Activated CD4-positive, alpha-beta T cell treated with anti-CD3 and anti-CD28 coated beads, Interleukin-2, amount 10 ng/mL, durations not matched to agents 7 days and 5 days (primary cell): ENCODE measurements at regions of chr14 and their contacts with region 1.

Region 1: DNA sequence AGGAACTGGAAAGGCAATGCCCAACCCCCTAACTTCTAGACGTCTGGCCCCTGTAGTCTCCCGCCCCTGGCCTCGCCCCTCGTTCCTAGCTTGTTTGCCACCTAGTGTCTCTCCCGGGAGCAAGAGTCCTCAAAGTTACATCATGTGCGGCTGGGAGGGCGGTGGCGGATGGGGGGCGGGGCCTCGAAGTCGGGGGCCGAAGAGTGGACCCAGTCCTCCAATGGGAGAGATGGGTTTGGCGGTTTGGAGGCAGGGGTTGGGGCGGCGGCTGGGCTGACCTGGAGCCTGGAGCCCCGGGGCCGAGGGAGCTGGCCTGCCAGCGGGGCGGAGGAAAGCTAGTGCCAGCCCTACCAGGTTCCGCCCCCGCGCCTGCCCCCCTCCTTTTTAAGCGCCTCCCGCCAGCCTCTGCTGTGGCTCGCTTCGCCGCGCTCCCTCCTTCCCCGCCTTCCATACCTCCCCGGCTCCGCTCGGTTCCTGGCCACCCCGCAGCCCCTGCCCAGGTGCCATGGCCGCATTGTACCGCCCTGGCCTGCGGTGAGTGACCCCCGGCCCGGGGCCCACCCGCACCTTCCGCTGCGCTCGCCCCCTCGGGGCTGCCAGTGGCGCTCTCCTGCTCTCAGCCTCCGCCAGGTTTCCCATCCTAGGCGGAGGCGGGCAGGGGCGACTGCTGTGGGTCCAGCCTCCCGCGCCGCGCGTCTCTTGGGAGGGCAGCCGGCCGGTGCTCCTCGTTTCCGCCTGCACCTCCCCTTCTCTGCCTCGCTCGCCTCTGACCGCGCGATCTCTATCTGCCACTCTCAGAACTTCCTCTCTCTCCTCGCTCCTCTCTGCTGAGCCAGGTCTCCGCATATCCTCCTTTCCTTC is at the start of gene PCK2:
- DNase-seq: peak; percentile 79
- H3K4me3 Mint-ChIP-seq: peak within 1 kb of the TSS; percentile 100
- H3K27ac Mint-ChIP-seq: peak within 1 kb of the TSS; percentile 98
- H3K4me1 Mint-ChIP-seq: peaks cover 35% of the 10 kb centered on the region
- H3K27me3 Mint-ChIP-seq: no peaks in the 10 kb centered on the region
- total RNA-seq, gene PCK2: 57.4 to 60.3 TPM

Region 2: GRCh38 chr14:24080888-24081738 is 13.0 kb before region 1 on chr14:
- CTCF ChIA-PET with region 1: interaction called, 36 read pairs
- POLR2A ChIA-PET with region 1: no interaction called
- DNase-seq: peak; percentile 79
- H3K4me3 Mint-ChIP-seq: peak overlapping the region; percentile 79
- H3K27ac Mint-ChIP-seq: peak overlapping the region; percentile 90
- H3K4me1 Mint-ChIP-seq: peaks cover 31% of the 10 kb centered on the region
- H3K27me3 Mint-ChIP-seq: peaks cover 3% of the 10 kb centered on the region

Region 3: GRCh38 chr14:24108336-24108874 is 14.3 kb after region 1 on chr14:
- CTCF ChIA-PET with region 1: interaction called, 138 read pairs
- POLR2A ChIA-PET with region 1: interaction called, 13 read pairs
- DNase-seq: no peak
- H3K4me3 Mint-ChIP-seq: no peak overlapping the region
- H3K27ac Mint-ChIP-seq: peak overlapping the region; percentile 96
- H3K4me1 Mint-ChIP-seq: peaks cover 44% of the 10 kb centered on the region
- H3K27me3 Mint-ChIP-seq: no peaks in the 10 kb centered on the region

Region 4: GRCh38 chr14:24114536-24115450 is 20.7 kb after region 1 on chr14 and contains the starts of genes DCAF11 and NRL:
- CTCF ChIA-PET with region 1: interaction called, 138 read pairs
- POLR2A ChIA-PET with region 1: interaction called, 9 read pairs
- DNase-seq: peak; percentile 99
- H3K4me3 Mint-ChIP-seq: peak within 1 kb of the TSS; percentile 100
- H3K27ac Mint-ChIP-seq: peak within 1 kb of the TSS; percentile 99
- H3K4me1 Mint-ChIP-seq: peaks cover 51% of the 10 kb centered on the region
- H3K27me3 Mint-ChIP-seq: no peaks in the 10 kb centered on the region
- total RNA-seq, gene DCAF11: 106 to 116 TPM
- total RNA-seq, gene NRL: 3.1 to 3.3 TPM

Region 5: GRCh38 chr14:24411443-24412389 is 317.6 kb after region 1 on chr14:
- CTCF ChIA-PET with region 1: no interaction called
- POLR2A ChIA-PET with region 1: no interaction called
- DNase-seq: peak; percentile 42
- H3K4me3 Mint-ChIP-seq: no peak overlapping the region
- H3K27ac Mint-ChIP-seq: no peak overlapping the region
- H3K4me1 Mint-ChIP-seq: no peaks in the 10 kb centered on the region
- H3K27me3 Mint-ChIP-seq: no peaks in the 10 kb centered on the region